ENCODE measurements at regions of chr21 and their contacts with region 1.

Region 1: GRCh38 chr21:34845521-34846451 is 177.0 kb downstream of the CLIC6 start:
- DNase-seq: no peak
- H3K4me3 ChIP-seq: no peak overlapping the region
- H3K27ac ChIP-seq: no peak overlapping the region
- H3K4me1 ChIP-seq: peaks cover 7 to 23% (median 15%) of the 10 kb centered on the region in 4 experiments
- H3K27me3 ChIP-seq: no peaks in the 10 kb centered on the region; a peak in 3 of 7 replicates
- CTCF ChIP-seq: no peak
- EP300 ChIP-seq: no peak
- POLR2A ChIP-seq: no peak
- RAD21 ChIP-seq: no peak

Region 2: GRCh38 chr21:34857874-34858273 is 12.1 kb after region 1 on chr21:
- CTCF ChIA-PET with region 1: interaction called, 32 read pairs
- POLR2A ChIA-PET with region 1: no interaction called
- DNase-seq: no peak
- H3K4me3 ChIP-seq: no peak overlapping the region
- H3K27ac ChIP-seq: no peak overlapping the region
- H3K4me1 ChIP-seq: no peaks in the 10 kb centered on the region
- H3K27me3 ChIP-seq: peaks cover 0 to 3% (median 0%) of the 10 kb centered on the region in 4 experiments; a peak in 1 of 7 replicates
- CTCF ChIP-seq: peak; percentile 38 to 63 (median 50); a peak in 3 of 4 replicates
- EP300 ChIP-seq: no peak
- POLR2A ChIP-seq: no peak
- RAD21 ChIP-seq: peak in 1 of 2 experiments; percentile 32; a peak in 2 of 4 replicates

Measured in H1 (cell line).